HepG2 (cell line): ENCODE measurements at regions of chr12 and their contacts with region 1.

Region 1: GRCh38 chr12:56189176-56189917 is at the start of gene SMARCC2:
- DNase-seq: peak; percentile 73
- ATAC-seq: peak; percentile 86
- H3K4me3 ChIP-seq: peak within 1 kb of the TSS; percentile 76 to 94 (median 93)
- H3K27ac ChIP-seq: peak within 1 kb of the TSS; percentile 74
- H3K4me1 ChIP-seq: peaks cover 34% of the 10 kb centered on the region
- H3K27me3 ChIP-seq: no peaks in the 10 kb centered on the region; a peak in 1 of 5 replicates
- CTCF ChIP-seq: peak; percentile 81
- EP300 ChIP-seq: no peak
- POLR2A ChIP-seq: peak; percentile 29 to 46; a peak in 2 of 4 replicates
- RAD21 ChIP-seq: peak; percentile 62
- total RNA-seq, gene SMARCC2: 13.1 and 21.3 TPM in 2 replicates

Region 2: GRCh38 chr12:56127888-56128669 is 61.3 kb before region 1 on chr12 and contains the start of gene ESYT1:
- CTCF ChIA-PET with region 1: interaction called, 24 read pairs
- POLR2A ChIA-PET with region 1: interaction called, 48 read pairs
- in situ Hi-C with region 1: loop called (anchors 5 kb)
- intact Hi-C with region 1: loop called (anchors 2 kb)
- DNase-seq: peak; percentile 100
- ATAC-seq: peak; percentile 90
- H3K4me3 ChIP-seq: peak within 1 kb of the TSS; percentile 72 to 89 (median 83)
- H3K27ac ChIP-seq: peak within 1 kb of the TSS; percentile 65
- H3K4me1 ChIP-seq: peaks cover 61% of the 10 kb centered on the region
- H3K27me3 ChIP-seq: no peaks in the 10 kb centered on the region
- CTCF ChIP-seq: peak; percentile 42
- EP300 ChIP-seq: no peak
- POLR2A ChIP-seq: peak; percentile 90 to 96
- RAD21 ChIP-seq: 0 out of 2 replicates have a peak, but pooled peaks have one; percentile 11
- total RNA-seq, gene ESYT1: 30.1 and 66.9 TPM in 2 replicates

Region 3: GRCh38 chr12:56158029-56158925 is 31.1 kb before region 1 on chr12 and contains the start of gene MYL6:
- CTCF ChIA-PET with region 1: interaction called, 3 read pairs
- POLR2A ChIA-PET with region 1: interaction called, 22 read pairs
- in situ Hi-C with region 1: no loop called
- intact Hi-C with region 1: loop called (anchors 5 kb)
- DNase-seq: peak; percentile 96
- ATAC-seq: peak; percentile 84
- H3K4me3 ChIP-seq: peak within 1 kb of the TSS; percentile 92 to 99 (median 95)
- H3K27ac ChIP-seq: peak within 1 kb of the TSS; percentile 87
- H3K4me1 ChIP-seq: peaks cover 64% of the 10 kb centered on the region
- H3K27me3 ChIP-seq: no peaks in the 10 kb centered on the region; a peak in 1 of 5 replicates
- CTCF ChIP-seq: no peak
- EP300 ChIP-seq: no peak
- POLR2A ChIP-seq: peak; percentile 98 to 99
- RAD21 ChIP-seq: no peak
- total RNA-seq, gene MYL6: 1,192 and 1,778 TPM in 2 replicates

Region 4: GRCh38 chr12:56266693-56267442 is 77.5 kb after region 1 on chr12 and contains the start of gene COQ10A:
- CTCF ChIA-PET with region 1: no interaction called
- POLR2A ChIA-PET with region 1: interaction called, 5 read pairs
- in situ Hi-C with region 1: no loop called
- intact Hi-C with region 1: loop called (anchors 2 kb)
- DNase-seq: peak; percentile 83
- ATAC-seq: peak; percentile 90
- H3K4me3 ChIP-seq: peak within 1 kb of the TSS; percentile 54 to 91 (median 83)
- H3K27ac ChIP-seq: peak within 1 kb of the TSS; percentile 82
- H3K4me1 ChIP-seq: peaks cover 18% of the 10 kb centered on the region
- H3K27me3 ChIP-seq: no peaks in the 10 kb centered on the region; a peak in 1 of 5 replicates
- CTCF ChIP-seq: peak; percentile 89
- EP300 ChIP-seq: no peak
- POLR2A ChIP-seq: peak; percentile 90 to 92
- RAD21 ChIP-seq: peak; percentile 62
- total RNA-seq, gene COQ10A: 18.6 and 21.0 TPM in 2 replicates

Region 5: GRCh38 chr12:56468216-56469006 is 279.1 kb after region 1 on chr12 and contains the start of gene SPRYD4:
- CTCF ChIA-PET with region 1: no interaction called
- POLR2A ChIA-PET with region 1: no interaction called
- in situ Hi-C with region 1: loop called (anchors 10 kb)
- intact Hi-C with region 1: loop called (anchors 5 kb)
- DNase-seq: peak; percentile 82
- ATAC-seq: peak; percentile 92
- H3K4me3 ChIP-seq: peak within 1 kb of the TSS; percentile 79 to 93 (median 80)
- H3K27ac ChIP-seq: peak within 1 kb of the TSS; percentile 86
- H3K4me1 ChIP-seq: peaks cover 23% of the 10 kb centered on the region
- H3K27me3 ChIP-seq: no peaks in the 10 kb centered on the region; a peak in 1 of 5 replicates
- CTCF ChIP-seq: peak; percentile 90
- EP300 ChIP-seq: 0 out of 4 replicates have a peak, but pooled peaks of 1 of the 2 experiments have one; percentile 9
- POLR2A ChIP-seq: peak; percentile 90
- RAD21 ChIP-seq: peak; percentile 54; the same call in 1 of the 2 replicates
- total RNA-seq, gene SPRYD4: 4.1 and 4.5 TPM in 2 replicates